ENCODE measurements at regions of chrX and their contacts with region 1.

Region 1: GRCh38 chrX:153609917-153610428 is 11.0 kb upstream of the CCNQ start:
- DNase-seq: peak in 1 of 2 experiments; percentile 89
- H3K4me3 ChIP-seq: peak overlapping the region in 2 of 4 experiments; percentile 33 to 51; a peak in 4 of 8 replicates
- H3K27ac ChIP-seq: no peak overlapping the region
- H3K4me1 ChIP-seq: no peaks in the 10 kb centered on the region
- H3K27me3 ChIP-seq: peaks cover 0 to 11% (median 8%) of the 10 kb centered on the region in 4 experiments; a peak in 6 of 7 replicates
- CTCF ChIP-seq: peak in 2 of 3 experiments; percentile 83 to 87; a peak in 3 of 4 replicates
- EP300 ChIP-seq: no peak
- POLR2A ChIP-seq: no peak
- RAD21 ChIP-seq: peak; percentile 66 to 76

Region 2: DNA sequence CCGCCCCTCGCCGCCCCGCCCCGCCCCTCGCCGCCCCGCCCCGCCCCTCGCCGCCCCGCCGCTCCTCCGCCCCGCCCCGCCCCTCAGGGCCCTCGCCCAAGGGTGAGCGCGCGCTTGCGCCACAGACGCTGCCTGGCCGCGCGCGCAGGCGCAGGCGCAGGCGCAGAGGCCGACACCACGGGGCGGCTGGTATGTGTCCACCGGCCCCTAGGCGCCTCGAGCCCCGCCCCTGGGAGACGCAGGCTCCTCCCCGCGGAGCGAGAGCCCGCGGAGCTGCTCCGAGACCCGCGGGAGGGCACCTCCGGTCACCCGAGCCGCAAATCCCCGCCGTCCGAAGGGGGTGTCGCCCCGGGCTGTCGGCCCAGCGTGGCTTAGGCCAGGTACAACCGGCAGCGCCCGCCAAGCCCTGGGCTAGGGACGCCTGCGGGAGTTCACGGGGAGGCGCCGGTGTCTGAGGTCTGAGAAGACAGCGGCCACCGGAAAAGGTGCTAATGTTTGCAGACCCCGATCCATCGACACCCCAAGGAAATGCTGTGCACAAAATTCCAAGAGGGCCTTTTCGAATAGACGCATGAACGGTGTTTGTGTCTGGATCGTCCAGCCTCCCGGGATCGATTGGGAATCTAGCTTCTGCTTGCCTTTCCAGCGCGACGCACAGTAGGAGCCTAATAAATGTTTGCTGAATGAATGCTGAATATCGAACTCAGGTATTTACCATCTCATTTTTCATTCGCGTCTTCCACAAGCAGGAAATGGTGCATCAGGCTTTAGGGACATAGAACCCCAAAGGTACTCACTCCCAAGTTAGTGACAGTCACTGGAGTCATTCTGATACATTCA is 10.6 kb before region 1 on chrX:
- CTCF ChIA-PET with region 1: interaction called, 22 read pairs
- POLR2A ChIA-PET with region 1: interaction called, 3 read pairs
- DNase-seq: peak in 1 of 2 experiments; percentile 74
- H3K4me3 ChIP-seq: peak overlapping the region; percentile 56 to 86 (median 68)
- H3K27ac ChIP-seq: no peak overlapping the region
- H3K4me1 ChIP-seq: peaks cover 0 to 4% (median 0%) of the 10 kb centered on the region in 4 experiments; a peak in 1 of 7 replicates
- H3K27me3 ChIP-seq: peaks cover 0 to 8% (median 0%) of the 10 kb centered on the region in 4 experiments; a peak in 3 of 7 replicates
- CTCF ChIP-seq: no peak
- EP300 ChIP-seq: no peak
- POLR2A ChIP-seq: no peak
- RAD21 ChIP-seq: no peak

Region 3: GRCh38 chrX:153635788-153636622 is 26.0 kb after region 1 on chrX:
- CTCF ChIA-PET with region 1: interaction called, 130 read pairs
- POLR2A ChIA-PET with region 1: no interaction called
- DNase-seq: peak; percentile 31 to 68
- H3K4me3 ChIP-seq: no peak overlapping the region
- H3K27ac ChIP-seq: no peak overlapping the region
- H3K4me1 ChIP-seq: peaks cover 0 to 2% (median under 1%) of the 10 kb centered on the region in 4 experiments; a peak in 1 of 7 replicates
- H3K27me3 ChIP-seq: peaks cover 0 to 7% (median 6%) of the 10 kb centered on the region in 4 experiments; a peak in 5 of 7 replicates
- CTCF ChIP-seq: peak in 2 of 3 experiments; percentile 87 to 95; a peak in 3 of 4 replicates
- EP300 ChIP-seq: no peak
- POLR2A ChIP-seq: no peak
- RAD21 ChIP-seq: peak; percentile 33 to 53

Region 4: GRCh38 chrX:153643431-153644351 is 33.7 kb after region 1 on chrX:
- CTCF ChIA-PET with region 1: interaction called, 130 read pairs
- POLR2A ChIA-PET with region 1: no interaction called
- DNase-seq: no peak
- H3K4me3 ChIP-seq: peak overlapping the region in 3 of 4 experiments; percentile 7 to 57 (median 33); a peak in 4 of 8 replicates
- H3K27ac ChIP-seq: no peak overlapping the region
- H3K4me1 ChIP-seq: peaks cover 0 to 20% (median 9%) of the 10 kb centered on the region in 4 experiments; a peak in 5 of 7 replicates
- H3K27me3 ChIP-seq: peaks cover 65 to 79% (median 78%) of the 10 kb centered on the region in 4 experiments
- CTCF ChIP-seq: peak in 2 of 3 experiments; percentile 15 to 44; a peak in 2 of 4 replicates
- EP300 ChIP-seq: no peak
- POLR2A ChIP-seq: no peak
- RAD21 ChIP-seq: no peak

Region 5: DNA sequence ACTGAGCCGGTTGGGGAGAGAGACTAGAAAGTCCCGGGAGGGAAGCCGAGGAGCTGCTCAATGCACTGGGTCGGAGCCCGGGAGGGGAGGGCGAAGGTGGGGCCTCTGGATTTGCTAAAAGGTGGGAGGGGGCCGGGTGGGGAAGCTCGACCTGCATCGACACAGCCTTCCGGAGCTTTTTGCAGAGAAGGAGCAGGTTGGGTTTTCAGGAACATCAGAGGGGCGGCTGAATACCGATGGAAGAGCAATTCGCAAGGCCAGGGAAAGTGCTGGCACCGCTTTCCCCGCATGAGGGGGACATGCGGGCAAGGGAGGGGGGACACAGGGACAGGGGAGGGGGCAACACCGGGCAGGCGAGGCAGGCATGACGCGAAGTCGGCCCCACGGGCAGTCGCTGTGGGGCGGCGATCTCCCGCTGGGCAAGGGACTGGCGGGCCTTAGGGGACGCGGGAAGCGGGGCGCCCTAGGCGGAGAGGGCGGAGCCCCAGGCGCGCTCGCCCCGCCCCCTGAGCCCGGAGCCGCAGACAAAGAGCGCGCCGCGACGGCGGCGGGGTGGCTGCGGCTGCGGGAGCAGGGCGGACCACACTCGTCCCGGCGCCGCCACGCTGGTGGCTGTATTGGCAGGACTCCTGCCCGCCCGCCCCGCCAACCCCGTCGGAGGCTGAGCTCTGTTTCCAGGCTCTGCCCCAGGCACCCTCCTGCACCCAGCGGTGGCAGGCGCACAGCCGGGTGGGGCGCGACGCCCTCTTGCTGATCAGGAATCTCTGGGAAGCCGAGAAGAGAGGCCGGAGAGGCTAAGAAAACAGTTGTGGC is 208.8 kb after region 1 on chrX:
- CTCF ChIA-PET with region 1: no interaction called
- POLR2A ChIA-PET with region 1: no interaction called
- DNase-seq: peak in 1 of 2 experiments; percentile 75
- H3K4me3 ChIP-seq: peak overlapping the region; percentile 27 to 57 (median 39)
- H3K27ac ChIP-seq: peak overlapping the region; percentile 63; the same call in 1 of the 2 replicates
- H3K4me1 ChIP-seq: peaks cover 0 to 21% (median 6%) of the 10 kb centered on the region in 4 experiments; a peak in 6 of 7 replicates
- H3K27me3 ChIP-seq: no peaks in the 10 kb centered on the region
- CTCF ChIP-seq: no peak
- EP300 ChIP-seq: 0 out of 3 replicates have a peak, but pooled peaks of 1 of the 2 experiments have one; percentile 14
- POLR2A ChIP-seq: peak in 1 of 2 experiments; percentile 64; a peak in 2 of 3 replicates
- RAD21 ChIP-seq: no peak